ENCODE measurements at regions of chr4 and their contacts with region 1.

Region 1: DNA sequence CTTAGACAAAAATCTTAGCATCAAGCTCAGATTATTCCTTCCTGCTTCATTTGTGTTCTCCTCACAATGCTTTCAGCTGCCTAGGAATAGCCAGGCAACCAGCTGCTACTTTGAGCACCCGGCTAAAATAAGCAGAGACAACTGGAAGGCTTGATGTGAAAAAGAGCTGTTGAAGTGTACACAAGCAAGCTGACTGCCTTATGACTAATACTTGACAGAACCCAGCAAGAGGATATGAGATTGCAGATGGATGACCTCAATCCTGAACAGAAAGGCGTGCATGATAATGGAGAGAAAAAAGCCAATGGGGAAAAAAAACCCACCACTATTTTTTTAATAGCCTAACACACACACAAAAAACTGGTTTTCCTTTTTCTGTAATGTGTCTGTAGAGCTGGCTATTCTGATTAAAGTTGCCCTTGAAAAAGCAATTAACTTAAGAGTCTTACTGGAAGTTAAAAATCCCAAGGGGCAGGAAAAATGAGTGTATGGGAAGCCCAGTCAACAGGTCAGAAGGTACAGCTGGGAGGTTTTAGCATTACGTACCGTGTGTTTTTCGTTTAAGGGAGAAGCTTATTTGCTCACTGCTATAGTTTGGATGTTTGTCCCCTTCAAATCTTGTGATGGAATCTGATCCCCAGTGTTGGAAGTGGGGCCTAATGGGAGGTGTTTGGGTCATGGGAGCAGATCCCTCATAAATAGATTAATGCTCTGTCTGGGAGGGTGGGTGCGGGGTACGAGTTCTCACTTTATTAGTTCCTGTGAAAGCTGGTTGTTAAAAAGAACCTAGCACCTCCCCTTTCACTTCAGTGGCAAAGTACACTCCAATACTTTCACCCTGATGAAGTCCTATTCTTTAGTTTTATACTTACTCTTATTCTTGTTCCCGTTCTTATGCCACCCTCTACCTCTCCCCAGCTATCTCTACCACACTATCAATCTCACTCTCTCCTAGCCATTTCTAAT is 37.1 kb upstream of the HERC6 start:
- DNase-seq: peak; percentile 55 to 72
- ATAC-seq: peak; percentile 100
- H3K4me3 ChIP-seq: no peak overlapping the region
- H3K27ac ChIP-seq: peak overlapping the region; percentile 84 to 90 (median 88)
- H3K4me1 ChIP-seq: peaks cover 9 to 16% of the 10 kb centered on the region in 2 donors
- H3K27me3 ChIP-seq: no peaks in the 10 kb centered on the region
- CTCF ChIP-seq: no peak
- POLR2A ChIP-seq: peak; percentile 24 to 69

Region 2: DNA sequence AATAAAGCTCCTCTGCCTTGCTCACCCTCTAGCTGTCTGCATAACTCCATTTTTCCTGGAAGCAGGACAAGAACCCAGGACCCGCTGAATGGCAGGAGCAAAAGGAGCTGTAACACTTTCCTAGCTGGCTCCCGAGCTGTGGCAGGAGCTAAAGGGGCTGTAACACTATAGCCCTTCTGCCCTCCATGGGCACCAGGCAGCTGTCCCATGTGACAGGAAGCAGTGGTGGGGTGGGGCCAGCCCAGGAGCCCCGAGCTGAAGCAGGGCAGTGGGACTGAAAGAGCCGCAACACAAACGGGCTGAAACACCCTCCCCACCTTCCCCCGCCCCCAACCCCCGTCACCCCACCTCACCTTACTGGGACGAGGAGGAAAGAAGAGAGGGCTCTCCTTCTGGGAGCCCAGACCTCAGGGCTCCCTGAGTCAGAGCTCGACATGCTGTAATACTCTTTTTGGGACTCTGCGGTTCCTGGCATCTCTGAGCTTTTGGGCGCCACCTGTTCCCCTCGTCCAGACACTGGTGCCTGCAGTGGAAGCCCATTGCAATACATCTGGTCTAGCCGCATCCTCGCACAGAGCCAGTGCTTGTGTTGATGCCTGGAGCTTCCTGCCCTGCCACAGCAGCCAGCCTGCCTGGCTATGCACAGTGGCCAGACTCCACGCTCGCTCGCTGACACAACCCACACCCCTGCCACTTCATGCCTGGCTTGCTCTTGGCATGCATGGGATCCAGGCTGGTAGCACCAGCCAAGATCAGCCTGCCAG is 96.5 kb before region 1 on chr4:
- in situ Hi-C with region 1: no loop called
- intact Hi-C with region 1: loop called (anchors 2 kb)
- DNase-seq: peak; percentile 70 to 93
- ATAC-seq: peak; percentile 78 to 85
- H3K4me3 ChIP-seq: peak overlapping the region; percentile 2 to 42 (median 36)
- H3K27ac ChIP-seq: peak overlapping the region; percentile 81 to 89 (median 86)
- H3K4me1 ChIP-seq: peaks cover 32 to 39% of the 10 kb centered on the region in 2 donors
- H3K27me3 ChIP-seq: no peaks in the 10 kb centered on the region
- CTCF ChIP-seq: no peak
- POLR2A ChIP-seq: no peak

Region 3: GRCh38 chr4:88297725-88298454 is 43.6 kb before region 1 on chr4:
- in situ Hi-C with region 1: no loop called
- intact Hi-C with region 1: loop called (anchors 5 kb)
- DNase-seq: peak in 1 of 2 donors; percentile 27
- ATAC-seq: peak; percentile 96 to 99
- H3K4me3 ChIP-seq: no peak overlapping the region
- H3K27ac ChIP-seq: peak overlapping the region; percentile 70 to 83 (median 73)
- H3K4me1 ChIP-seq: peaks cover 23 to 38% of the 10 kb centered on the region in 2 donors
- H3K27me3 ChIP-seq: no peaks in the 10 kb centered on the region
- CTCF ChIP-seq: peak in 1 of 5 experiments; percentile 14
- POLR2A ChIP-seq: no peak

Region 4: GRCh38 chr4:88382621-88383020 is 41.1 kb after region 1 on chr4:
- in situ Hi-C with region 1: no loop called
- intact Hi-C with region 1: no loop called
- DNase-seq: no peak
- ATAC-seq: no peak
- H3K4me3 ChIP-seq: no peak overlapping the region
- H3K27ac ChIP-seq: no peak overlapping the region
- H3K4me1 ChIP-seq: no peaks in the 10 kb centered on the region
- H3K27me3 ChIP-seq: no peaks in the 10 kb centered on the region
- CTCF ChIP-seq: no peak
- POLR2A ChIP-seq: no peak